Gastrocnemius medialis (tissue), 4 donors: ENCODE measurements at regions of chr1 and their contacts with region 1.

Region 1: DNA sequence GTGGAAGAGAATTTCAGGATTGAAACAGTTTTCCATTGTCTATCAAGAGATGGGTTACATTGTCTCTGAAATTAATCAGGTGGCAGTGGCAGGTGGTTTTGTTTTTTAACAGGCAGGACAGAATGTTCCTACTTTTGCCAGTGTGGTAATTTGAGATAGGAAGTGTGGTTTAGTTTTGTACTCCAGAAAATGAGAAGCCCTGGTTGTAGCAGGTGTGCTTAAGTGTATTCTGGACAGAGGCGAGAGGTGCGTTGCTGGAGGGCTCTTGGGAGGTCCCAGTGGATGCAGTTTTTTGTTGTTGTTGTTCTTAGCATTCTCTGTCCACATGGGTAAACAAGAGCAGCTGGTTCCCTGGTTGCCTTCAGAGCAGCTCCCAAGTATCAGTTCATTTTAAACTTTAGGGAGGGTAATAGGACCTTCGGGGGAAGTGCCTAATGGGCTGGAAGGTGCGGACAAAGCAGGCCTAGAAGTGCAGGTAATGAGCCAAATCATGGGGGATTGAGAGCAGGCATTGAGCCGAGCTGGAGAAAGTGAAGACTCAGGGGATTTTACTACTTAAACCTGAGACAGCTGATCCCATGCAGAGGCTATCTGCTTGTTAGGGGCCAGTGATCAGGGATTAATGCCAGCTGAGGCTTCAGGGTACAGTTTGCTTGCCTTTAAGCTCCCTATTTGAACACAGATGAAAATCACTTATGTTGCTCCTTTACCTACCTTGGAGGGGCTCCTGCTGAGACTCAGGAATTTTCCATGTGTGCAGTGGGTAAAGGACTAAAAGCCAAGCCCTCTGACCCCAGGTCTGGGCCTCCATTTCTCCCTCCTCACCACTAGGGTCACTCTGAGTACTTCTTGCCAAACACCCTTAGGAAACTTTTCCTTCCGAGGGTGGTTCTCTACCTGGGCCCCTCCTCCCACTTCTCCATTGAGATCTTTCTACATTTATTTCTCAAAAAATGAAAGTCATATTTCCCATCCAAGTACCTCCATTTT is 6.1 kb downstream of the PFKFB2 start:
- DNase-seq: peak; percentile 47 to 53
- ATAC-seq: peak; percentile 85 to 88
- H3K4me3 ChIP-seq: peak overlapping the region in 2 of 4 donors; percentile 1 to 14
- H3K27ac ChIP-seq: peak overlapping the region; percentile 93 to 95 (median 94)
- H3K4me1 ChIP-seq: peaks cover 37 to 64% of the 10 kb centered on the region in 2 donors
- H3K27me3 ChIP-seq: no peaks in the 10 kb centered on the region
- CTCF ChIP-seq: peak in 3 of 5 experiments; percentile 24 to 45 (median 42)
- POLR2A ChIP-seq: peak; percentile 68 to 82

Region 2: GRCh38 chr1:207811920-207812720 is 752.9 kb after region 1 on chr1:
- in situ Hi-C with region 1: no loop called
- intact Hi-C with region 1: loop called (anchors 5 kb)
- DNase-seq: peak; percentile 97
- ATAC-seq: peak; percentile 63 to 64
- H3K4me3 ChIP-seq: peak overlapping the region; percentile 30 to 95 (median 58)
- H3K27ac ChIP-seq: peak overlapping the region; percentile 96 to 100 (median 99)
- H3K4me1 ChIP-seq: peaks cover 92 to 96% of the 10 kb centered on the region in 2 donors
- H3K27me3 ChIP-seq: no peaks in the 10 kb centered on the region
- CTCF ChIP-seq: peak in 4 of 5 experiments; percentile 59 to 81 (median 72)
- POLR2A ChIP-seq: peak; percentile 61 to 78